ENCODE measurements at regions of chr12 and their contacts with region 1.

Region 1: GRCh38 chr12:19158923-19159322 is 29.4 kb downstream of the PLEKHA5 start:
- DNase-seq: no peak
- H3K4me3 ChIP-seq: no peak overlapping the region
- H3K27ac ChIP-seq: no peak overlapping the region
- H3K4me1 ChIP-seq: no peaks in the 10 kb centered on the region
- H3K27me3 ChIP-seq: no peaks in the 10 kb centered on the region
- CTCF ChIP-seq: no peak

Region 2: GRCh38 chr12:19095756-19096480 is 63.0 kb before region 1 on chr12:
- CTCF ChIA-PET with region 1: no interaction called
- POLR2A ChIA-PET with region 1: interaction called, 11 read pairs
- intact Hi-C with region 1: no loop called
- DNase-seq: peak in 1 of 2 experiments; percentile 11
- H3K4me3 ChIP-seq: no peak overlapping the region
- H3K27ac ChIP-seq: no peak overlapping the region
- H3K4me1 ChIP-seq: peaks cover 13% of the 10 kb centered on the region
- H3K27me3 ChIP-seq: no peaks in the 10 kb centered on the region
- CTCF ChIP-seq: no peak

Region 3: GRCh38 chr12:19144985-19145384 is 13.9 kb before region 1 on chr12:
- CTCF ChIA-PET with region 1: no interaction called
- POLR2A ChIA-PET with region 1: no interaction called
- intact Hi-C with region 1: no loop called
- DNase-seq: no peak
- H3K4me3 ChIP-seq: no peak overlapping the region
- H3K27ac ChIP-seq: no peak overlapping the region
- H3K4me1 ChIP-seq: no peaks in the 10 kb centered on the region
- H3K27me3 ChIP-seq: no peaks in the 10 kb centered on the region
- CTCF ChIP-seq: no peak

Region 4: GRCh38 chr12:19529951-19530635 is 371.2 kb after region 1 on chr12:
- CTCF ChIA-PET with region 1: no interaction called
- POLR2A ChIA-PET with region 1: interaction called, 11 read pairs
- intact Hi-C with region 1: no loop called
- DNase-seq: no peak
- H3K4me3 ChIP-seq: no peak overlapping the region
- H3K27ac ChIP-seq: 0 out of 2 replicates have a peak overlapping the region, but pooled peaks have one; percentile 15
- H3K4me1 ChIP-seq: peaks cover 22% of the 10 kb centered on the region
- H3K27me3 ChIP-seq: no peaks in the 10 kb centered on the region
- CTCF ChIP-seq: no peak

Measured in PC-9 (cell line).